PC-3 (cell line): ENCODE measurements at regions of chr5 and their contacts with region 1.

Region 1: DNA sequence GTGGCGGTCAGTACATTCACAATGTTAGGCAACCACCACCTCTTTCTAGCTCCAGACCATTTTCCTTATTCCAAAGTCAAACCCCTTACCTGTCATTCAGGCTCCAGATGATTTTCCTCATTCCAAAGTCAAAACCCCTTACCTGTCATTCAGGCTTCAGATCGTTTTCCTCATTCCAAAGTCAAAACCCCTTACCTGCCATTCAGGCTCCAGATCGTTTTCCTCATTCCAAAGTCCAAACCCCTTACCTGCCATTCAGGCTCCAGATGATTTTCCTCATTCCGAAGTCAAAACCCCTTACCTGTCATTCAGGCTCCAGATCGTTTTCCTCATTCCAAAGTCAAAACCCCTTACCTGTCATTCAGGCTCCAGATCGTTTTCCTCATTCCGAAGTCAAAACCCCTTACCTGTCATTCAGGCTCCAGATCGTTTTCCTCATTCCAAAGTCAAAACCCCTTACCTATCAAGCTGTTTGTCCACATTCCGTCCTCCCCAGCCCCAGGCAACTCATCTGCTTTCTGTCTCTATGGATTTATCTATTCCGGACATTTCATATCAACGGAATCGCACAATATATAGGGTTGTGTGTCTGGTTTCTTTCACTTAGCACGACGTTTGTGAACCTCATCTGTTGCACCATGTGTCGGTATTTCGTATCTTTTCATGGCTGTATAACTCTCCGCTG is 5.2 kb downstream of the PLEKHG4B start:
- DNase-seq: no peak
- ATAC-seq: no peak
- H3K4me3 ChIP-seq: no peak overlapping the region
- H3K27ac ChIP-seq: no peak overlapping the region
- H3K4me1 ChIP-seq: no peaks in the 10 kb centered on the region
- H3K27me3 ChIP-seq: peaks cover 58% of the 10 kb centered on the region
- CTCF ChIP-seq: no peak

Region 2: GRCh38 chr5:111171-111570 is 14.1 kb after region 1 on chr5:
- CTCF ChIA-PET with region 1: no interaction called
- POLR2A ChIA-PET with region 1: no interaction called
- intact Hi-C with region 1: loop called (anchors 1 kb)
- DNase-seq: no peak
- ATAC-seq: no peak
- H3K4me3 ChIP-seq: no peak overlapping the region
- H3K27ac ChIP-seq: no peak overlapping the region
- H3K4me1 ChIP-seq: no peaks in the 10 kb centered on the region
- H3K27me3 ChIP-seq: no peaks in the 10 kb centered on the region
- CTCF ChIP-seq: no peak

Region 3: GRCh38 chr5:252546-252945 is 155.4 kb after region 1 on chr5:
- CTCF ChIA-PET with region 1: no interaction called
- POLR2A ChIA-PET with region 1: no interaction called
- intact Hi-C with region 1: no loop called
- DNase-seq: peak; percentile 87
- ATAC-seq: peak; percentile 84
- H3K4me3 ChIP-seq: peak overlapping the region; percentile 18; the same call in 1 of the 2 replicates
- H3K27ac ChIP-seq: peak overlapping the region; percentile 91
- H3K4me1 ChIP-seq: peaks cover 19% of the 10 kb centered on the region
- H3K27me3 ChIP-seq: no peaks in the 10 kb centered on the region
- CTCF ChIP-seq: no peak